Mammary epithelial cell (primary cell): ENCODE measurements at regions of chr6 and their contacts with region 1.

Region 1: GRCh38 chr6:144588674-144589325 is 303.7 kb downstream of the UTRN start:
- DNase-seq: no peak
- H3K4me3 ChIP-seq: no peak overlapping the region
- H3K27ac ChIP-seq: no peak overlapping the region
- H3K4me1 ChIP-seq: no peaks in the 10 kb centered on the region
- H3K27me3 ChIP-seq: no peaks in the 10 kb centered on the region
- CTCF ChIP-seq: no peak

Region 2: GRCh38 chr6:144613859-144614258 is 25.1 kb after region 1 on chr6:
- CTCF ChIA-PET with region 1: no interaction called
- dilution Hi-C with region 1: no loop called
- in situ Hi-C with region 1: no loop called
- intact Hi-C with region 1: loop called (anchors 1 kb)
- DNase-seq: peak; percentile 37
- H3K4me3 ChIP-seq: no peak overlapping the region
- H3K27ac ChIP-seq: no peak overlapping the region
- H3K4me1 ChIP-seq: no peaks in the 10 kb centered on the region
- H3K27me3 ChIP-seq: no peaks in the 10 kb centered on the region
- CTCF ChIP-seq: no peak